ENCODE measurements at regions of chr7 and their contacts with region 1.

Region 1: DNA sequence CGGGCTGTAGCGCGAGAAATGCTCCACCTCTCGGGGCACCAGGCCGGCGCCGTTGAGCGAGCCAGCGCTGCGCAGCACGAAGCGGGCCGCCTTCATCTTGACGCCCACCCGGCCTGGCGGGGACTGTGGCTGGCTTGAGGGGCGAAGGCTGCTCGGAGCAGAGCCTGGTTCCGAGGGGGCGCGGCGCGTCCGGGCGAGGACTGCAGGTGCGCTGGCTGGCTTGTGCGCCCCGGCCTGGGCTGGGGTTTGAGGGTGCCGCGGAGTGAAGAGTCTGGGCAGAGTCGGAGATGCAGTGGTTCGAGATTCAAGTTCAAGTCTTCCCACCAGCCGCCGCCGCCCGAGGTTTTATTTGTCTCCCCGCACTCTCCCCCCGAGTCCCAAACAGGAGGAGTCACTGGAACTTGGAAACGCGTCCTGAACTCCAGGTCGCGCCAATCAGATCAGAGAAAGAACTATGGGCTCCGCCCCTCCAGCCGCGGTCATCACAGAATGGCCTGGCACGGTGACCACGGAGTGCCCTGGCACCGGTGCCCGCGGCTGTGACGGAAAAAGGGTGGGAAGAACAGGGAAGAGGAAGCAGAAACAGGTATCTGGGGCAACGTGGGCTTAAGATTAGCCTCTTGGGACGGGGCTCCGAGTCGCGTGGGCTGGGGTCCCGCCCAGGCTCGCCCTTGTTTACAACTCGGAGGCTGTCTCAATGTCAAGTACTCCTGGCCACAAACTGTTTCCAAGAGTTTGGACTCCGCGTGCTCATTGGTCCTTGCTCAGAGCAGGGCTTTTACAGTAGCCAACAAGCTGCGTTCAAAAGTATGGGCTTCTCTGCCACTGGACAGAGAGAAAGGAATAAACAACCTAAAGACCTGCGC is at the start of gene PDK4:
- DNase-seq: peak; percentile 90 to 99
- H3K4me3 ChIP-seq: peak within 1 kb of the TSS; percentile 86 to 95
- H3K27ac ChIP-seq: peak within 1 kb of the TSS; percentile 95 to 97
- H3K4me1 ChIP-seq: peaks cover 0 to 13% of the 10 kb centered on the region in 2 donors
- H3K27me3 ChIP-seq: no peaks in the 10 kb centered on the region
- CTCF ChIP-seq: no peak
- total RNA-seq, gene PDK4: 227 TPM

Region 2: DNA sequence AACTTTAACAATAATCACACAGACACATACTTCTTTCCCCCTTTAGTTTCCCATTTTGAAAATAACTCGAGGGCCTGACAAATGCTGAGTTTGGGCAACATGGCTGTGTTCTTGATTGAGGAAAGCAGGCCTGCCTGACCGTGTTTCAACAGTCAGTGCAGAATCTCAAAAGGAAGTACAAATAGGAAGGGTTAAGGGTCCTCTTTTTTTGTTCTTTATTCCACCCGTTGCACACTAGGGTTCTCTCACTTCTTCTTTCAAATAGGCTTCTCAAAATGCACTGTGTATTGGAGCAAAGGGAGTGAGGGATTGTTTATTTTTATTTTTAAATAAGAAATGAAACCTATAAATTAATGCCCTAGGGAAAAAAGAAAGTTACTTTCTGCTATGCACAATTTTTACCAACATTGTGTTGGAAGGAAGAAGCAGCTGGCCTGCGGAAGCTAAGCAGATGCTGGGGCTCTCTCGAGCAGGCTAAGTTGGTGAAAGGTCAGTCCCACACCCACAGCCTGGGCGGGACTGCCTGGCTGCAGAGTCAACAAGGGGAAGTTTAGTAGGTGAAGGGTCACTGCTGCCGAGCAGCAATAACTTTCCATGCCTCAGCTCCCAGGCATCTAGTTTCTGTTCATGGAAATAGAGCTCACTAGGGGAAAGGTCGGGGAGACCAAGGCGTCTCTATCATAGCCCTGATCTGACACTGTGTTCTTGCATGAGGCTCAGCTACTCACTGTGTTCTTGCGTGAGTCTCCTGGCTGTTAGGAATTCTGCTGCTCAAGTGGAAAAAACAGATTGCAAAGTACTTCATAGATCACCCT is 12.1 kb after region 1 on chr7:
- intact Hi-C with region 1: loop called (anchors 1 kb)
- DNase-seq: peak; percentile 86 to 98
- H3K4me3 ChIP-seq: peak overlapping the region; percentile 26 to 30
- H3K27ac ChIP-seq: peak overlapping the region; percentile 68 to 84
- H3K4me1 ChIP-seq: peaks cover 0 to 46% of the 10 kb centered on the region in 2 donors
- H3K27me3 ChIP-seq: no peaks in the 10 kb centered on the region
- CTCF ChIP-seq: no peak

Region 3: GRCh38 chr7:95684037-95684436 is 87.6 kb after region 1 on chr7:
- intact Hi-C with region 1: loop called (anchors 2 kb)
- DNase-seq: no peak
- H3K4me3 ChIP-seq: no peak overlapping the region
- H3K27ac ChIP-seq: no peak overlapping the region
- H3K4me1 ChIP-seq: no peaks in the 10 kb centered on the region
- H3K27me3 ChIP-seq: no peaks in the 10 kb centered on the region
- CTCF ChIP-seq: peak; percentile 38 to 63 (median 57)

Measured in ascending aorta (tissue), 2 donors.